Colonic mucosa (tissue), 4 donors: ENCODE measurements at regions of chr20 and their contacts with region 1.

Region 1: DNA sequence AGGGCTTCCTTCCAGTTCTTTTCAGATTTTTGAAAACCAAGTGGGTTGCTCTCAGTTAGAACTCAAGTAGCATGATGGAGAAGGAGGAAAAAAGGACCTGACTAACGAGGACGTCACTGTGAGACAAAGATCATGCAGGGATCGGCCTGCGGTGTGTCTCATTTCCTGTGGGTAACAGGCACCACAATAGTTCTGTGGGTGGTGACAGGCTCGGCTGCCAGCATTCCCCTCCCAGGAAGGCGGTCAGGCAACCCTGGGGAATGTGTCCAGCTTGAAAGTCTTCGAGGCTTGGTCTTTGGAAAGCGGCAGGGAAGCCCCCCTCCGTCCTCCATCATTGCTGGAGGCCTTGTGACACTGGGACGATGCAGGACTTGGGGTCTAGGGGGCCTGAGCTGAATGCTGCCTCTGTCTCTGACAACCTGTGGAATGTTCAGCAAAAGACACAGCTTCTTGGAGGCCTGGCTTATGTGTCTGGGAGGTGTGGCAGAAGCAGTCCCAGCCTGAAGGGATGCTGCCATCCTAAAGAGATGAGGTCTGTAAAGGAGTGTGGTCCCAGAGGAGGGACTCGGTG is 121.0 kb downstream of the BCAS1 start:
- DNase-seq: no peak
- H3K4me3 ChIP-seq: no peak overlapping the region
- H3K27ac ChIP-seq: no peak overlapping the region
- H3K4me1 ChIP-seq: no peaks in the 10 kb centered on the region
- H3K27me3 ChIP-seq: no peaks in the 10 kb centered on the region
- CTCF ChIP-seq: no peak

Region 2: GRCh38 chr20:53419693-53420460 is 529.5 kb before region 1 on chr20:
- intact Hi-C with region 1: loop called (anchors 5 kb)
- DNase-seq: no peak
- H3K4me3 ChIP-seq: no peak overlapping the region
- H3K27ac ChIP-seq: no peak overlapping the region
- H3K4me1 ChIP-seq: no peaks in the 10 kb centered on the region
- H3K27me3 ChIP-seq: no peaks in the 10 kb centered on the region
- CTCF ChIP-seq: no peak

Region 3: DNA sequence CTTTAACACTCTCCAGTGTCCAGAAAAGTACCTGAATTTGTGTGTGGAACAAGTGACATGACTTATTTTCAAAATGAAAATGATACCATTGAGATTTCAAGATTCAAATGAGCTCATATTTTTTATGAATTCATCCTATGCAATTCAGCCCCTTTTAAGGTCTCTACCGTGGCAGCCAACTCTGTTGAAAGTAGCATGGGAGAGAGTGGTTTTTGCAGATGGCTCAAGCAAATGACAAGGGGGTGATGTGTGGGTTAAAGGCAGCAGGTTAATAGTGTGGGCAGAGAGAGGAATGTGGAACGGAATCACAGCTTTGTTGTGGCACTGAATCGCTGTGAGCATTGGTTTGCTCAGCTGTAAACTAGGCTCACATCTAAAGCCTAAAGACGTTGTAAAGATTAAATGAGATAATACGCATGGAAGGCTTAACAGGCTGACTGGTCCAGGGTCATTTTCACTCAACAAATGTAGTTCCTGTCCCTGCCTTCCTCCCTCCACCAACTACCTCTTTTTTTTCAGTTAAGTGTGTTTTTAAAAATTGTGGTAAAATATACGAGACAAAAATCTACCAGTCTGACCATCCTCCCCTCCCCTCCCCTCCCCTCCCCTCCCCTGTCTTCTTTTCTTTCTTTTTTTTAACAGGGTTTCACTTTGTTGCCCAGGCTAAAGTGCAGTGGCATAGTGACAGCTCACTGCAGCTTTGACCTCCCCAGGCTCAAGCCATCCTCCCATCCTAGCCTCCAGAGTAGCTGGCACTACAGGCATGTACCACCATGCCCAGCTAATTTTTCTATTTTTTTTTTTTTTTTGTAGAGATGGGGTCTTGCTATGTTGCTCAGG is 241.1 kb before region 1 on chr20:
- intact Hi-C with region 1: no loop called
- DNase-seq: no peak
- H3K4me3 ChIP-seq: no peak overlapping the region
- H3K27ac ChIP-seq: no peak overlapping the region
- H3K4me1 ChIP-seq: no peaks in the 10 kb centered on the region
- H3K27me3 ChIP-seq: no peaks in the 10 kb centered on the region
- CTCF ChIP-seq: no peak